Sigmoid colon (tissue), 7 donors: ENCODE measurements at regions of chr3 and their contacts with region 1.

Region 1: GRCh38 chr3:64533617-64534317 is 154.0 kb downstream of the ADAMTS9 start:
- DNase-seq: peak; percentile 98
- H3K4me3 ChIP-seq: no peak overlapping the region
- H3K27ac ChIP-seq: peak overlapping the region; percentile 60 to 81 (median 68)
- H3K4me1 ChIP-seq: peaks cover 0 to 41% (median 22%) of the 10 kb centered on the region in 4 donors
- H3K27me3 ChIP-seq: no peaks in the 10 kb centered on the region
- CTCF ChIP-seq: peak; percentile 81 to 87 (median 85)
- EP300 ChIP-seq: peak in 3 of 4 donors; percentile 10 to 81 (median 77)
- POLR2A ChIP-seq: no peak

Region 2: GRCh38 chr3:63687278-63688225 is 846.2 kb before region 1 on chr3:
- intact Hi-C with region 1: no loop called
- DNase-seq: no peak
- H3K4me3 ChIP-seq: no peak overlapping the region
- H3K27ac ChIP-seq: no peak overlapping the region
- H3K4me1 ChIP-seq: no peaks in the 10 kb centered on the region
- H3K27me3 ChIP-seq: no peaks in the 10 kb centered on the region
- CTCF ChIP-seq: no peak
- EP300 ChIP-seq: no peak
- POLR2A ChIP-seq: no peak

Region 3: GRCh38 chr3:64518950-64519349 is 14.8 kb before region 1 on chr3:
- intact Hi-C with region 1: no loop called
- DNase-seq: no peak
- H3K4me3 ChIP-seq: no peak overlapping the region
- H3K27ac ChIP-seq: no peak overlapping the region
- H3K4me1 ChIP-seq: no peaks in the 10 kb centered on the region
- H3K27me3 ChIP-seq: no peaks in the 10 kb centered on the region
- CTCF ChIP-seq: no peak
- EP300 ChIP-seq: no peak
- POLR2A ChIP-seq: no peak

Region 4: GRCh38 chr3:64653101-64653500 is 119.3 kb after region 1 on chr3:
- intact Hi-C with region 1: no loop called
- DNase-seq: no peak
- H3K4me3 ChIP-seq: no peak overlapping the region
- H3K27ac ChIP-seq: peak overlapping the region in 1 of 4 donors; percentile 67
- H3K4me1 ChIP-seq: peaks cover 0 to 34% (median 29%) of the 10 kb centered on the region in 4 donors
- H3K27me3 ChIP-seq: no peaks in the 10 kb centered on the region
- CTCF ChIP-seq: no peak
- EP300 ChIP-seq: no peak
- POLR2A ChIP-seq: no peak

Region 5: DNA sequence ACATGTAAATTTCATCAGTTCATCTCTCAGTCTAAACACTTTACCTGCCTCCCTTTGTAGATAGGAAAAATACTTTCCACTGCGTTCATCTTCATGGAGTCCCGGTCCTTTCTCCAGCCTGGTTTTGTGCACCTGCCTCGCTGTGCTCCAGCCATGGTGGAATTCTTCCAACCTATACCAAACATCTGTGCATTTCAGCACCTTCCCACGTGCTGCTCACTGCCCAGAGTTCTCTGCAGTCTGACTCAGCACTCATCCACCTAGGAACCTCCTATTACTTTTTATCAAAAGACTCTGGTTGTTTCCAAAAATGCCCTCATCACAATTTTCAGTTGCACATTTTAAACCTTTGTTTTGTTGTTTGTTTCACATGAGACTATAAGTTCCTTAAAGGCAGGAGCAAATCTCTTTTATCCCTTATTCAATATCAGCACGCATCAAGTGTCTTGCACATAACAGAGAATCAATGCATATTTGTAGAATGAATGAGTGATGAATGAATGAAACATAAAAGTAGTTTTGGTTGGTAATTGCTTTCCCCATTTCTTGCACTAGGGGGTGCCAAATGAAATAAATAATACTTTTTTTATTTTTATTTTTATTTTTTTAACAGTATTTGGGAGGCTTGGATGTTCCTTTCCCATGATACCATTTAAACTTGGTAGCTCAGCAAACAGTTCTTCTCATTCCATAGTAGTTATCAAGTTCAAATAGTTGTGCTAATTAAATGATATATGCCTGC is 184.3 kb after region 1 on chr3:
- intact Hi-C with region 1: no loop called
- DNase-seq: no peak
- H3K4me3 ChIP-seq: no peak overlapping the region
- H3K27ac ChIP-seq: no peak overlapping the region
- H3K4me1 ChIP-seq: peaks cover 0 to 46% (median 26%) of the 10 kb centered on the region in 4 donors
- H3K27me3 ChIP-seq: no peaks in the 10 kb centered on the region
- CTCF ChIP-seq: peak in 1 of 4 experiments; percentile 25
- EP300 ChIP-seq: no peak
- POLR2A ChIP-seq: no peak

Region 6: DNA sequence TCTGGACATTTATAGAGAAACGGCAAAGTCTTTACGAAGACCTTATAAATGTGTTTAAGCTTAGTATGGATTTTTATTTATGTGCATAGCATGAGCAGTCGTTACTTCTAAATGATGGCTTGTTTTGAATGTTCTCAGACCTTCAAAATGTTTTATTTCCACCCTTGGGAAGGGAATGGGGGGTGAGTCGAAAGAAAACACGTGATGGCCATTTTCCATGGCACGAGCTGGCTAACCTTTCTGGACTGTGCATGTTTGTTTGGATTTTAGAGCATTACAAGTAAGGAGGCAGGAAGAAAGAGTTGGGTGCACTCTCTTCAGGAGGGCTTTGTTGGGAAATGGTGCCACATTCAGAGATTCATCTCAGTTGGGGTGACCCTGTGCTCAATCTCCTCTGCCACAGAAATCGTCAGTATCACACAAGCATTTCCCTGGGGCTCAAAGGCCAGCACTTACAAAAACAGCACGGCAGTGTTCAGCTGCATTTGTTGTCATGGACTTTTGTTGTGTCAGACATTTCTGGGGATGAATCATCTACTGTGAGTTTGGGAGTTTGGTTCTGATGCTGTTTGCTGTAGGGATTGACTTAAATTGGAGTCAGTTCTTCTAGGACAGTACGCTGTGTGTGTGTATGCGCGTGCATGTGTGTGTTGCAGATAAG is 206.3 kb after region 1 on chr3:
- intact Hi-C with region 1: loop called (anchors 10 kb)
- DNase-seq: no peak
- H3K4me3 ChIP-seq: no peak overlapping the region
- H3K27ac ChIP-seq: peak overlapping the region; percentile 35 to 70 (median 64)
- H3K4me1 ChIP-seq: peaks cover 0 to 56% (median 29%) of the 10 kb centered on the region in 4 donors
- H3K27me3 ChIP-seq: no peaks in the 10 kb centered on the region
- CTCF ChIP-seq: no peak
- EP300 ChIP-seq: peak in 1 of 4 donors; percentile 18
- POLR2A ChIP-seq: no peak

Region 7: GRCh38 chr3:65019443-65020055 is 485.8 kb after region 1 on chr3:
- intact Hi-C with region 1: loop called (anchors 10 kb)
- DNase-seq: no peak
- H3K4me3 ChIP-seq: no peak overlapping the region
- H3K27ac ChIP-seq: peak overlapping the region in 1 of 4 donors; percentile 62
- H3K4me1 ChIP-seq: peaks cover 0 to 30% (median 20%) of the 10 kb centered on the region in 4 donors
- H3K27me3 ChIP-seq: no peaks in the 10 kb centered on the region
- CTCF ChIP-seq: no peak
- EP300 ChIP-seq: no peak
- POLR2A ChIP-seq: no peak

Region 8: GRCh38 chr3:65245133-65246063 is 711.6 kb after region 1 on chr3:
- intact Hi-C with region 1: loop called (anchors 1 kb)
- DNase-seq: no peak
- H3K4me3 ChIP-seq: no peak overlapping the region
- H3K27ac ChIP-seq: no peak overlapping the region
- H3K4me1 ChIP-seq: peaks cover 0 to 9% (median 7%) of the 10 kb centered on the region in 4 donors
- H3K27me3 ChIP-seq: no peaks in the 10 kb centered on the region
- CTCF ChIP-seq: peak in 3 of 4 experiments; percentile 27 to 51 (median 43)
- EP300 ChIP-seq: no peak
- POLR2A ChIP-seq: no peak

Region 9: DNA sequence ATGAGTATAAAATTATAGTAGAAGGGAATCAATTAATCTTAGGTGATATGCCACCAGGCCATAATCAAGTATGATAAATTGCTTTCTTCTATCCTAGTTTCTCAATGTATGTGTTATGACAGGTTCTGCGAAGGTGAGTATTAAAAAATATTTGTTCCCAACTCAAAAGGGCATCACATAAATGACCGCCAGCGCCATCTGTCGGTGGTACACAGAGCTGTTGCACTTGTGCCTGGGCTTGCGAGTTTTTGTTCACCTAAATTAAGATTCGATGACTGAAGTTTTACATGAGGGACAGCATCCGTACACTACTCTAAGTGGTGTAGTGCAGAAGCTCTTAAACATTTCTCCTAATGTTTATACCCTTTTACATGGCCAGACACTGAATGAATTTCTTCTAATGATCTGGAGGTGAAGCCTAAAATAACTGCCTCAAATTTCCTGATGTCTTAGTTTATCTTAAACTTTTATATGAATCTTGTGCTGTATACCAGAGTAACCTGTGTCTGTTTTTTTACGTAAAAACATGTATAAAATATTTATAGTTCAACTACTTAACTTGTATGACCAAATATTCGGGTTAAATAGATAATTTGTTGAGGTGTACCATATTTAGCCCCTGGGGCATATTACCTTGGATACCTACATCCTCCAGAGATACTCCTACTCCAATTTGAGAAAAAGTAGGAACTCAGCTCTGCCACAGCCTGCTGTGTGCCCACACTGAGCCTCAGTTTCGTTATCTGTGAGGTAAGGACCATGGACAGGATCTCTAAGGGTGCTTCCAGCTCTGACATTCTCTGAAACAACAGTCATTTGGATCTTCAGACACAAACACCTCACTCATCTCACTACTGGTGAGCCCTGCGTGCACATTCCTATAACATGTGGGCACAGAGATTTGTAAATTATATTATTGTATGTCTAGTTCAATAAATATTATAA is 1139.4 kb after region 1 on chr3:
- intact Hi-C with region 1: loop called (anchors 5 kb)
- DNase-seq: peak; percentile 71
- H3K4me3 ChIP-seq: no peak overlapping the region
- H3K27ac ChIP-seq: no peak overlapping the region
- H3K4me1 ChIP-seq: no peaks in the 10 kb centered on the region
- H3K27me3 ChIP-seq: no peaks in the 10 kb centered on the region
- CTCF ChIP-seq: peak; percentile 21 to 86 (median 56)
- EP300 ChIP-seq: no peak
- POLR2A ChIP-seq: no peak